Heart right ventricle (tissue), 16 donors: ENCODE measurements at regions of chr1 and their contacts with region 1.

Region 1: GRCh38 chr1:44213222-44214112 is at the start of gene DMAP1:
- DNase-seq: peak; percentile 82 to 83
- ATAC-seq: peak; percentile 88 to 95 (median 94)
- H3K4me3 ChIP-seq: peak within 1 kb of the TSS; percentile 70 to 99 (median 83)
- H3K27ac ChIP-seq: peak within 1 kb of the TSS; percentile 53 to 89 (median 84)
- H3K4me1 ChIP-seq: peaks cover 2 to 33% (median 18%) of the 10 kb centered on the region in 9 donors
- H3K27me3 ChIP-seq: no peaks in the 10 kb centered on the region
- CTCF ChIP-seq: peak in 2 of 9 donors; percentile 22
- total RNA-seq, gene DMAP1: 24.1 to 33.9 (median 27.6) TPM

Region 2: GRCh38 chr1:43991476-43992231 is 221.8 kb before region 1 on chr1 and contains the start of gene CCDC24:
- intact Hi-C with region 1: loop called in 1 of 10 experiments (anchors 10 kb)
- DNase-seq: peak; percentile 81
- ATAC-seq: peak; percentile 86 to 94 (median 90)
- H3K4me3 ChIP-seq: peak within 1 kb of the TSS; percentile 45 to 82 (median 71)
- H3K27ac ChIP-seq: peak within 1 kb of the TSS in 7 of 10 donors; percentile 7 to 82 (median 62)
- H3K4me1 ChIP-seq: peaks cover 5 to 23% (median 11%) of the 10 kb centered on the region in 9 donors
- H3K27me3 ChIP-seq: no peaks in the 10 kb centered on the region
- CTCF ChIP-seq: peak in 5 of 9 donors; percentile 0 to 41 (median 15)
- total RNA-seq, gene CCDC24: 0.55 to 3.1 (median 1.3) TPM

Region 3: GRCh38 chr1:44318097-44319088 is 104.9 kb after region 1 on chr1:
- intact Hi-C with region 1: loop called in 8 of 10 experiments (anchors 5 to 10 kb)
- DNase-seq: peak in 1 of 2 donors; percentile 49
- ATAC-seq: no peak
- H3K4me3 ChIP-seq: no peak overlapping the region
- H3K27ac ChIP-seq: no peak overlapping the region
- H3K4me1 ChIP-seq: peaks cover 0 to 12% (median 0%) of the 10 kb centered on the region in 9 donors
- H3K27me3 ChIP-seq: no peaks in the 10 kb centered on the region
- CTCF ChIP-seq: peak; percentile 71 to 86 (median 80)

Region 4: GRCh38 chr1:44594871-44595746 is 381.6 kb after region 1 on chr1:
- intact Hi-C with region 1: loop called in 8 of 10 experiments (anchors 2 to 5 kb)
- DNase-seq: peak; percentile 77 to 88
- ATAC-seq: peak; percentile 92 to 95 (median 94)
- H3K4me3 ChIP-seq: no peak overlapping the region
- H3K27ac ChIP-seq: no peak overlapping the region
- H3K4me1 ChIP-seq: no peaks in the 10 kb centered on the region
- H3K27me3 ChIP-seq: peaks cover 0 to 21% (median 4%) of the 10 kb centered on the region in 7 donors
- CTCF ChIP-seq: peak; percentile 92 to 99 (median 98)

Region 5: DNA sequence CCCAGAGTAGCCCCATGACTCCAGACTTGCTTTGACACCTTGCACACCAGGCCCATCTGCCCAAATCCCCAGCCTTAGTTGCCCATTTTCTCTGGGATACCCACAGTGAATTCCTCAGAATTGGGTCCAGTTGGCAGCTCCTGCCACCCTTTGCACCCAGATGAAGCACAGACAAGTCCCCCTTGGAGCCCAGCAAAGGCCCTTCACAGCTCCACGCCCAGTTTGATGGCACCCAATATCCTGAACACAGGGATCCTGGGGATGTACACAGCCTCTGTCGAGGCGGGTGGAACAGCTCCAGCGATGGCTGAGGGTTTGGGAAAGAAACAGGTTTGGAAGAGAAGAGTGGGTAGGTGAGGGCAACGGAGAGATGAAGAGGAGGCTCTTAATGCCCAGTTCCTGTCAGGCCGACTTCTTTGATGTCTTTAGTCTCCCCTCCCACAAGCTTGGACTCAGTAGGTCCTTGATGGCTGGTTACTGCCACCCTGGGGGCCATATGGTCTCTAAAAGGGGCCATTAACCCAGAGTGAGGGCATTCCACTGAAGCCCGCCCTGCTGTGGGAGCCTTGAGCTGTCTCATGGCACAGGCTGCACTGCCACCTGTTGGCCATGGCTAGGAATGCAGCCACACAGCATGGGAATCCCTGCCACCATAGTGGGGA is 439.1 kb after region 1 on chr1:
- intact Hi-C with region 1: loop called in 4 of 10 experiments (anchors 5 to 10 kb)
- DNase-seq: peak; percentile 64 to 82
- ATAC-seq: peak; percentile 66 to 88 (median 78)
- H3K4me3 ChIP-seq: no peak overlapping the region
- H3K27ac ChIP-seq: no peak overlapping the region
- H3K4me1 ChIP-seq: peaks cover 0 to 10% (median 0%) of the 10 kb centered on the region in 9 donors
- H3K27me3 ChIP-seq: no peaks in the 10 kb centered on the region
- CTCF ChIP-seq: peak; percentile 84 to 97 (median 95)